CD8-positive, alpha-beta T cell (primary cell): ENCODE measurements at regions of chr19 and their contacts with region 1.

Region 1: DNA sequence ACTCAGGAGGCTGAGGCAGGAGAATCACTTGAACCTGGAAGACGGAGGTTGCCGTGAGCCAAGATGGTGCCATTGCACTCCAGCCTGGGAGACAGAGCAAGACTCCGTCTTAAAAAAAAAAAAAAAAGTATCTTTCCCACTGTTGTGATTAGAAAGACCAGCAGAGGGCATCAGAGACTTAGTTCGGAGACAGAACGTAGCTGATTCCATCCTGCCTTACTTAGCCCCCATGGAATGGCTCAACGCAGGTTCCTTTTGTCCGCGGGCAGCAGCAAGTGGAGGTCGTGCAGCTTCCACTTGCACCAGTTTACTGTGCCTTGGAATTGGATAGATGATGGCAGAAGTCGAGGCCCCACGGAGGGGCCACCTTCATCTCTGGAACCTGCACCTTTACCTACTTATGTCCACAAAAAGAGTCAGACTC is 8.1 kb downstream of the TIMM29 start:
- DNase-seq: peak in 5 of 9 experiments; percentile 33 to 76 (median 50)
- ATAC-seq: peak; percentile 79
- H3K4me3 ChIP-seq: no peak overlapping the region
- H3K4me3 Mint-ChIP-seq: no peak overlapping the region
- H3K27ac ChIP-seq: no peak overlapping the region
- H3K27ac Mint-ChIP-seq: no peak overlapping the region
- H3K4me1 ChIP-seq: no peaks in the 10 kb centered on the region
- H3K4me1 Mint-ChIP-seq: peaks cover 8% of the 10 kb centered on the region
- H3K27me3 ChIP-seq: no peaks in the 10 kb centered on the region
- H3K27me3 Mint-ChIP-seq: no peaks in the 10 kb centered on the region
- CTCF ChIP-seq: peak; percentile 60

Region 2: GRCh38 chr19:10858204-10858828 is 78.4 kb before region 1 on chr19:
- CTCF ChIA-PET with region 1: no interaction called
- POLR2A ChIA-PET with region 1: no interaction called
- intact Hi-C with region 1: no loop called
- DNase-seq: peak in 4 of 9 experiments; percentile 44 to 68 (median 52)
- ATAC-seq: peak; percentile 48
- H3K4me3 ChIP-seq: no peak overlapping the region
- H3K4me3 Mint-ChIP-seq: no peak overlapping the region
- H3K27ac ChIP-seq: no peak overlapping the region
- H3K27ac Mint-ChIP-seq: no peak overlapping the region
- H3K4me1 ChIP-seq: no peaks in the 10 kb centered on the region
- H3K4me1 Mint-ChIP-seq: peaks cover 3% of the 10 kb centered on the region
- H3K27me3 ChIP-seq: no peaks in the 10 kb centered on the region
- H3K27me3 Mint-ChIP-seq: no peaks in the 10 kb centered on the region
- CTCF ChIP-seq: peak; percentile 61

Region 3: GRCh38 chr19:10979951-10980381 is 43.3 kb after region 1 on chr19:
- CTCF ChIA-PET with region 1: interaction called, 7 read pairs
- POLR2A ChIA-PET with region 1: interaction called, 4 read pairs
- intact Hi-C with region 1: loop called in 1 of 2 experiments (anchors 5 kb)
- DNase-seq: peak in 3 of 9 experiments; percentile 31 to 53 (median 38)
- ATAC-seq: peak; percentile 72
- H3K4me3 ChIP-seq: no peak overlapping the region
- H3K4me3 Mint-ChIP-seq: peak overlapping the region; percentile 32
- H3K27ac ChIP-seq: no peak overlapping the region
- H3K27ac Mint-ChIP-seq: no peak overlapping the region
- H3K4me1 ChIP-seq: peaks cover 7% of the 10 kb centered on the region
- H3K4me1 Mint-ChIP-seq: peaks cover 30% of the 10 kb centered on the region
- H3K27me3 ChIP-seq: no peaks in the 10 kb centered on the region
- H3K27me3 Mint-ChIP-seq: no peaks in the 10 kb centered on the region
- CTCF ChIP-seq: no peak

Region 4: GRCh38 chr19:10998045-10998533 is 61.4 kb after region 1 on chr19:
- CTCF ChIA-PET with region 1: interaction called, 3 read pairs
- POLR2A ChIA-PET with region 1: interaction called, 3 read pairs
- intact Hi-C with region 1: loop called (anchors 5 to 10 kb)
- DNase-seq: no peak
- ATAC-seq: no peak
- H3K4me3 ChIP-seq: no peak overlapping the region
- H3K4me3 Mint-ChIP-seq: no peak overlapping the region
- H3K27ac ChIP-seq: no peak overlapping the region
- H3K27ac Mint-ChIP-seq: no peak overlapping the region
- H3K4me1 ChIP-seq: no peaks in the 10 kb centered on the region
- H3K4me1 Mint-ChIP-seq: no peaks in the 10 kb centered on the region
- H3K27me3 ChIP-seq: no peaks in the 10 kb centered on the region
- H3K27me3 Mint-ChIP-seq: no peaks in the 10 kb centered on the region
- CTCF ChIP-seq: no peak

Region 5: GRCh38 chr19:11005521-11005920 is 68.8 kb after region 1 on chr19:
- CTCF ChIA-PET with region 1: interaction called, 11 read pairs
- POLR2A ChIA-PET with region 1: interaction called, 3 read pairs
- intact Hi-C with region 1: loop called in 1 of 2 experiments (anchors 10 kb)
- DNase-seq: no peak
- ATAC-seq: no peak
- H3K4me3 ChIP-seq: no peak overlapping the region
- H3K4me3 Mint-ChIP-seq: no peak overlapping the region
- H3K27ac ChIP-seq: no peak overlapping the region
- H3K27ac Mint-ChIP-seq: no peak overlapping the region
- H3K4me1 ChIP-seq: no peaks in the 10 kb centered on the region
- H3K4me1 Mint-ChIP-seq: no peaks in the 10 kb centered on the region
- H3K27me3 ChIP-seq: no peaks in the 10 kb centered on the region
- H3K27me3 Mint-ChIP-seq: no peaks in the 10 kb centered on the region
- CTCF ChIP-seq: no peak